Lower leg skin (tissue), 4 donors: ENCODE measurements at regions of chr15 and their contacts with region 1.

Region 1: DNA sequence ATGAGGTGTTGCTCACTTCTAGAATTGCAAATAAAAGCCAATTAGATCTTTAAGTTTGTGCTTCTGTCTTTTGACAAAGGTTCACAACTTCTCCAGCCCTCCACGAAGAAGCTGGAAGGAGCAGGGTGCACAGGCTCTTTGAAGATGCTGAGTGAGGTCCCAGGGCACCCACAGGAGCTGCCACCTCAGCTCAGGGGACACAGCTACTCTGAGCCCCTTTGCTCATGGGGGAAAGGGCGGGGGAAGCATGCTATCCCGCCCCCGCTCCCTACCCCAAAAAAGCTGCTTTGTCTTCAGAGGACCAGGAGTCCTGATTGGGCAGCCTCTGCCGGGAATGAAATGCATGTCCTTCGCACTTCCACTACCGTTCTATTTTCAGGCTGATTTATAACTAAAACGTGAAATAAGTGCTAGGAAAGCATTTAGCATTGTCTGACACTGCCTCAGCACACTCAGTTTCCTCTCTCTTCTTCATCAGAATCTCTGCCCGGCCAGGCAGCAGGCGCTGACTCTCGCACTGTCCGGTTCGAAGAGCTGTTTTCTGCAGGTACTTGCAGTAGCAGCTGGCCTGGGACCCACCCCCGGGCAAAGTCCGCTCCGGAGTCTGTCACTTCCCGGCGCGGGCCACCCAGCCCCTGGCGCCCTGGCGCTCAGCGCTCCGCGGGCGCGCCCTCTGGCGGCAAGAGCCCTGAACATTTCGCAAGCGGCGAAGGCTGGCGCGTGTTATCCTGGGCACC is 45.5 kb upstream of the KLHL25 start:
- DNase-seq: peak; percentile 71 to 96
- H3K4me3 ChIP-seq: no peak overlapping the region
- CTCF ChIP-seq: peak in 2 of 3 donors; percentile 21 to 86
- POLR2A ChIP-seq: no peak

Region 2: GRCh38 chr15:85730001-85730820 is 110.0 kb before region 1 on chr15:
- intact Hi-C with region 1: loop called (anchors 5 kb)
- DNase-seq: no peak
- H3K4me3 ChIP-seq: no peak overlapping the region
- CTCF ChIP-seq: peak in 1 of 3 donors; percentile 28
- POLR2A ChIP-seq: no peak